ENCODE measurements at regions of chr17 and their contacts with region 1.

Region 1: GRCh38 chr17:60372790-60373483 is 19.0 kb downstream of the USP32 start:
- DNase-seq: peak; percentile 88
- ATAC-seq: peak; percentile 99
- H3K4me3 ChIP-seq: peak overlapping the region; percentile 14; the same call in 1 of the 2 replicates
- H3K27ac ChIP-seq: peak overlapping the region; percentile 69
- H3K4me1 ChIP-seq: peaks cover 23% of the 10 kb centered on the region
- H3K27me3 ChIP-seq: no peaks in the 10 kb centered on the region
- CTCF ChIP-seq: no peak

Region 2: GRCh38 chr17:60321336-60322055 is 51.4 kb before region 1 on chr17:
- CTCF ChIA-PET with region 1: no interaction called
- POLR2A ChIA-PET with region 1: no interaction called
- intact Hi-C with region 1: loop called (anchors 5 kb)
- DNase-seq: peak; percentile 16
- ATAC-seq: peak; percentile 37; the same call in 1 of the 2 replicates
- H3K4me3 ChIP-seq: no peak overlapping the region
- H3K27ac ChIP-seq: no peak overlapping the region
- H3K4me1 ChIP-seq: peaks cover 9% of the 10 kb centered on the region; the same call in 1 of the 2 replicates
- H3K27me3 ChIP-seq: no peaks in the 10 kb centered on the region
- CTCF ChIP-seq: no peak

Region 3: GRCh38 chr17:60455378-60455777 is 82.4 kb after region 1 on chr17:
- CTCF ChIA-PET with region 1: no interaction called
- POLR2A ChIA-PET with region 1: no interaction called
- intact Hi-C with region 1: no loop called
- DNase-seq: no peak
- ATAC-seq: no peak
- H3K4me3 ChIP-seq: no peak overlapping the region
- H3K27ac ChIP-seq: no peak overlapping the region
- H3K4me1 ChIP-seq: no peaks in the 10 kb centered on the region
- H3K27me3 ChIP-seq: no peaks in the 10 kb centered on the region
- CTCF ChIP-seq: no peak